ENCODE measurements at regions of chr5 and their contacts with region 1.

Region 1: GRCh38 chr5:57779383-57780223 is 297.0 kb upstream of the ACTBL2 start:
- DNase-seq: peak; percentile 10 to 12
- ATAC-seq: peak; percentile 79 to 85
- H3K4me3 ChIP-seq: no peak overlapping the region
- H3K27ac ChIP-seq: peak overlapping the region; percentile 14 to 47 (median 28)
- H3K4me1 ChIP-seq: peaks cover 11 to 18% of the 10 kb centered on the region in 2 donors
- H3K27me3 ChIP-seq: no peaks in the 10 kb centered on the region
- CTCF ChIP-seq: peak; percentile 39 to 67 (median 62)
- POLR2A ChIP-seq: no peak

Region 2: GRCh38 chr5:57298295-57298984 is 481.2 kb before region 1 on chr5:
- in situ Hi-C with region 1: loop called in 3 of 4 experiments (anchors 10 to 25 kb)
- intact Hi-C with region 1: loop called (anchors 5 kb)
- DNase-seq: peak; percentile 53 to 68
- ATAC-seq: peak; percentile 86 to 93
- H3K4me3 ChIP-seq: peak overlapping the region in 1 of 4 donors; percentile 14
- H3K27ac ChIP-seq: no peak overlapping the region
- H3K4me1 ChIP-seq: peaks cover 2 to 6% of the 10 kb centered on the region in 2 donors
- H3K27me3 ChIP-seq: no peaks in the 10 kb centered on the region
- CTCF ChIP-seq: peak; percentile 62 to 84 (median 67)
- POLR2A ChIP-seq: no peak

Region 3: DNA sequence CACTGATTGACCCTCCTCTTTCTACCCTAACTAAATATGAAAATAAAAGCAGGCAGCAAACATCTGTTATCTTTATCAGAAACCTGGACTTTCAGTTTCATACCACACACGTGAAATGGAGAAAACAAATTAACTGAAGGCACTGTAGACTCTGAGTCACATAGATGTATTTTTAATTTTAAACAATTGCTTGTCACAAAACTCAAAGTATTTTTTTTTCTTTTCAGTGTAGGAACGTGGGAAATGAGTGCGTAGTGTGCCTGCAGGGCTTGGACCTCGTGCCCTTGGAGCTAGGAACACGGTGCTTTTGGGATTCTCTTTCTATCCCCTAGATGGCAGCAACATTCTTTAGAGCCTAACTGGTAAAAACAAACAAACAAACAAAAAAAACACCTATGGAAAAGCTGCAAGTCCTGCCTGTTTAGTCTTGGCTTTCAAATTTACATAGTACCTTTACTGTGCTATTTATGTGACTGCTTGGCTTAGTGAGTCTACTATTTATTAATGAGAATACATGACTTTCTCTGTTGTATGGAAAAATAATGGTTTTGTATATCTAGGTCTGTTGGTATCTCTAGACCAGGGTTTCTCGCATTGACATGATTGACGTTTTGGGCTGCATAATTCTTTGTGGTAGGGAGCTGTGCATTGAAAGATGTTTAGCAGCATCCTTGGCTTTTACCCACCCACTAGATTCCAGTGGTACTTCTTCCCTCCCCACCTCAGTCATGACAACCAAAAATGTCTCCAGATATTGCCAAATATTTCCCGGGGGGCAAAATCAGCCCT is 280.1 kb before region 1 on chr5:
- in situ Hi-C with region 1: loop called in 2 of 4 experiments (anchors 25 kb)
- intact Hi-C with region 1: loop called (anchors 1 kb)
- DNase-seq: no peak
- ATAC-seq: peak; percentile 68 to 71
- H3K4me3 ChIP-seq: peak overlapping the region in 2 of 4 donors; percentile 25 to 49
- H3K27ac ChIP-seq: no peak overlapping the region
- H3K4me1 ChIP-seq: peaks cover 0 to 11% of the 10 kb centered on the region in 2 donors
- H3K27me3 ChIP-seq: no peaks in the 10 kb centered on the region
- CTCF ChIP-seq: peak; percentile 36 to 76 (median 55)
- POLR2A ChIP-seq: no peak

Region 4: DNA sequence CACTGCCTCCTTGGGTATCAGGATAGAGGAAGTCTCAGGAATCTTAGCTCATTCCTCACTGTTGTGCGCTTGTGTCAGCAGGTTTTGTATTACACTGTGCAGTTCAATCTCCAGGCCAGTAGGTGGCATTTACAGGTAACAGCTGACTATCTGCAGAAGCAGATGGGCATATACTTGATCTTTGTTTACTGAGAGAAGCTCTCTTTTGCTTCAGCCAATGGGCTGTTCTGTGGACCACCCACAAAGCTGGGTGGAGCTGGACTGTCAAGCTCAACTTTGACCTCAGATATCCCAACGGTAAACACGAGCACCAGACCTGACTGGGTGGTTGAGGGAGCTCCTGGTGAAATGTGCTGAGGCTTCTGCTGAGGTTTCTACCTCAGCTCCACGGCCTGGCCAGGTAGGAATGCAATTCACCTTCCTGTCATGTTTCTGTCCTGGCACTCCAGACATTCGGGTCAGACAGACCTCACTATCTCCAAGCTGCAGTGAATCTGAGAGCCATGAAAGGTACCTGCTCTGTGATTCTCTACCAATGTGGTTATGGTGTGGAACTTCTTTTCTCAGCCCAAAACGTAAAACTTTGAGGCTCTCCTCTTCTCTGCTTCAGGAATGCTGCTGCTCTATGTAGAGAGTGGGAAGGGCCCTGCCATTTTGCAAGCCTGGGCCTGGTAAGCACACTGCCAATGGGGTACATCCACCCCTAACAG is 129.1 kb before region 1 on chr5:
- in situ Hi-C with region 1: no loop called
- intact Hi-C with region 1: loop called (anchors 5 kb)
- DNase-seq: peak in 1 of 2 donors; percentile 17
- ATAC-seq: peak; percentile 46 to 57
- H3K4me3 ChIP-seq: no peak overlapping the region
- H3K27ac ChIP-seq: no peak overlapping the region
- H3K4me1 ChIP-seq: peaks cover 7 to 16% of the 10 kb centered on the region in 2 donors
- H3K27me3 ChIP-seq: no peaks in the 10 kb centered on the region
- CTCF ChIP-seq: peak; percentile 39 to 62 (median 60)
- POLR2A ChIP-seq: no peak

Region 5: GRCh38 chr5:57887851-57888621 is 108.4 kb after region 1 on chr5:
- in situ Hi-C with region 1: no loop called
- intact Hi-C with region 1: loop called (anchors 5 kb)
- DNase-seq: peak in 1 of 2 donors; percentile 13
- ATAC-seq: peak in 1 of 2 donors; percentile 85
- H3K4me3 ChIP-seq: no peak overlapping the region
- H3K27ac ChIP-seq: no peak overlapping the region
- H3K4me1 ChIP-seq: no peaks in the 10 kb centered on the region
- H3K27me3 ChIP-seq: no peaks in the 10 kb centered on the region
- CTCF ChIP-seq: peak; percentile 17 to 56 (median 31)
- POLR2A ChIP-seq: no peak

Region 6: DNA sequence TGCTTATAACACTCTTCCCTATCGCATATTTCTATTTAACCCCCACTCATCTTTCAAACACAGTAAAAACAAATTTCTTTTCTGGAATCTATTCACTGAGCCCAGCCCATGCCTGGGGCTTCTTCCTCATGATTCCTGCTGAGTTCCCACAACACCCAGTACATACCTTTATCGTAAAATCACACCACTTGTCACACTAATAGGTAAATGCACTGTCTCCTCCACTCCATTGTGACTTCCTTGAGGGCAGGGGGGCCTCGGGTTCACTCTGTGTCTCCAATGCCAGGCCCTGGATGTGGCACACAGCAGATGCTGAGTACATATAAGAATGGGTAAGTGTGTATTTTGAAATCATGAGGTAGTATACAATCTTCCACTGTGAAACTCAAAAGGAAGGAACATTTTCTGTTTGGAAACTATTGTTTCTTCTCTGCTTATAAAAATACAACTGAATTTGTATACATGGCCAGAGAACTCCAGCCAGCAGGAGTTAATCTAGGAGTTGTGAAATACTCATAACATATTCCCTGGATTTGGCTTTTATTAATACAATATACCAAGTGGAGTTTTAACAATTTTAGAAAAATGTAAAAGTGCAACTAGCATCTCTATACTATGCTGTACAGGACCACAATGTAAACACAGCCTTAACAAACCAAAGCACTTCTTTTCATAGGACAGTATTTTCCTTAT is 673.1 kb after region 1 on chr5:
- in situ Hi-C with region 1: loop called in 2 of 4 experiments (anchors 5 to 10 kb)
- intact Hi-C with region 1: no loop called
- DNase-seq: no peak
- ATAC-seq: no peak
- H3K4me3 ChIP-seq: no peak overlapping the region
- H3K27ac ChIP-seq: no peak overlapping the region
- H3K4me1 ChIP-seq: no peaks in the 10 kb centered on the region
- H3K27me3 ChIP-seq: no peaks in the 10 kb centered on the region
- CTCF ChIP-seq: no peak
- POLR2A ChIP-seq: no peak